K562 (cell line): ENCODE measurements at regions of chr17 and their contacts with region 1.

Region 1: DNA sequence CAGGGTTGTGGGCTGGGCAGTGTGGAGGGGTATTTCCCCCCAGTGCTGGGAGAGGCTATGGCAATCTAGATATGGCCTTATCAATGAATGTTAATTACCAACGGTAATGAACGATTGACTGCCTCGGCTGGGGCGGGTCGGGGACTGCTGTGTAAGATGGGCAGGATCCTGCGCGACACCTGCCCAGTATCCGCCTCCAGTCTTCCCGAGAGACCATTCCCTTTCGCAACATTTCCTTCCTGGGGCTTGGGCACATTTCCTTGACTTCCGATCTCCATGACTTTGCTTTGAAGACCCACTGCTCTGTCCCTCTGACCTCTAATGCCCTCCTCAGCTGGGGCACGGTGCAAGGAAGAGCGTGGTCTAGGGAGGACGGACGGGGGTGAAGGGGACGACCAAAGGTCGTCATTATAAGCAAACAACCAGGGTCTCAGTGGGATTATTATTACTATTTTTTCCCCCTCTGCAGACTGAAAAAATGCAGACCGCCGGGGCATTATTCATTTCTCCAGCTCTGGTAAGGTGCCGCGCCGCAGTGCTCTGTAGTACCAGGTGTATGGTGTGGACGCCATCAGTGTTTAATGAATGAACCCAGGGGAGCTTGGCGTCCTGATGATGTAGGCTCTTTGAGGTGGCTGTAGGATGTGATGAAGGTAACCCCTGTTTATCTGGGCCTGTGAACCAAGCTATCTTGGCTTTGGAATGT is 506 bp downstream of the ATP5MC1 start:
- DNase-seq: no peak
- ATAC-seq: no peak
- H3K4me3 ChIP-seq: peak overlapping the region; percentile 81
- H3K27ac ChIP-seq: peak overlapping the region; percentile 91
- H3K4me1 ChIP-seq: peaks cover 6 to 8% of the 10 kb centered on the region in 2 experiments; a peak in 2 of 5 replicates
- H3K27me3 ChIP-seq: no peaks in the 10 kb centered on the region
- CTCF ChIP-seq: 0 out of 6 replicates have a peak, but pooled peaks of 1 of the 3 experiments have one; percentile 4
- EP300 ChIP-seq: no peak
- POLR2A ChIP-seq: no peak
- RAD21 ChIP-seq: no peak

Region 2: GRCh38 chr17:48690655-48691054 is 202.4 kb before region 1 on chr17:
- CTCF ChIA-PET with region 1: no interaction called
- POLR2A ChIA-PET with region 1: no interaction called
- in situ Hi-C with region 1: no loop called
- intact Hi-C with region 1: no loop called
- DNase-seq: no peak
- ATAC-seq: no peak
- H3K4me3 ChIP-seq: no peak overlapping the region
- H3K27ac ChIP-seq: no peak overlapping the region
- H3K4me1 ChIP-seq: no peaks in the 10 kb centered on the region; a peak in 1 of 5 replicates
- H3K27me3 ChIP-seq: peaks cover 8 to 10% of the 10 kb centered on the region in 2 experiments; a peak in 3 of 5 replicates
- CTCF ChIP-seq: no peak
- EP300 ChIP-seq: no peak
- POLR2A ChIP-seq: no peak
- RAD21 ChIP-seq: no peak

Region 3: GRCh38 chr17:48908047-48908843 is 15.2 kb after region 1 on chr17 and contains the start of gene UBE2Z:
- CTCF ChIA-PET with region 1: interaction called, 3 read pairs
- POLR2A ChIA-PET with region 1: interaction called, 52 read pairs
- in situ Hi-C with region 1: no loop called
- intact Hi-C with region 1: loop called (anchors 1 kb)
- DNase-seq: peak; percentile 95 to 98 (median 96)
- ATAC-seq: peak; percentile 94
- H3K4me3 ChIP-seq: peak within 1 kb of the TSS; percentile 88
- H3K27ac ChIP-seq: peak within 1 kb of the TSS; percentile 91
- H3K4me1 ChIP-seq: peaks cover 8 to 12% of the 10 kb centered on the region in 2 experiments; a peak in 4 of 5 replicates
- H3K27me3 ChIP-seq: no peaks in the 10 kb centered on the region
- CTCF ChIP-seq: peak; percentile 43 to 51 (median 43); a peak in 4 of 6 replicates
- EP300 ChIP-seq: no peak
- POLR2A ChIP-seq: peak; percentile 92
- RAD21 ChIP-seq: no peak
- polyA plus RNA-seq, gene UBE2Z: 11.8 to 15.0 TPM

Region 4: DNA sequence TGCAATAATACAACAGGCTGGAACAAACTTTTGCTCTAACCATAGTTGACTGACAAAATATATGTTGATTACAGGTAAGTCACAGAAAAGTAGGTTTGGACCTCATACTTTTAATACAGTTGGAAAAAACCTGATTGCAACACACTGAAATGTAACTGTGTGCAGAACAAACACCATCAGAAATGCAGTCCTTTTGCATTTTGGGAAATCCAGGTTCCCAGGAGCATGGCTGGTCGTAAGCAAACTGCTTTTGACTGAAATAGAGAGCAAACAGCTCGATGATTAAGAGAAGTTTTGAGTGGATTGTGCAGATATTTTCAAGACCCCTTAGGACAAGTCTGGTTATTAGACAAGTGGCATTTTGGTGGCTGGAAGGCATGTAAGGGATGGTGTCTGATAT is 112.0 kb after region 1 on chr17:
- CTCF ChIA-PET with region 1: no interaction called
- POLR2A ChIA-PET with region 1: interaction called, 10 read pairs
- in situ Hi-C with region 1: no loop called
- intact Hi-C with region 1: no loop called
- DNase-seq: no peak
- ATAC-seq: no peak
- H3K4me3 ChIP-seq: no peak overlapping the region
- H3K27ac ChIP-seq: no peak overlapping the region
- H3K4me1 ChIP-seq: peaks cover 7 to 11% of the 10 kb centered on the region in 2 experiments; a peak in 4 of 5 replicates
- H3K27me3 ChIP-seq: no peaks in the 10 kb centered on the region
- CTCF ChIP-seq: no peak
- EP300 ChIP-seq: no peak
- POLR2A ChIP-seq: no peak
- RAD21 ChIP-seq: no peak

Region 5: GRCh38 chr17:49022391-49022941 is 129.4 kb after region 1 on chr17:
- CTCF ChIA-PET with region 1: no interaction called
- POLR2A ChIA-PET with region 1: no interaction called
- in situ Hi-C with region 1: no loop called
- intact Hi-C with region 1: loop called (anchors 10 kb)
- DNase-seq: peak in 2 of 4 experiments; percentile 48 to 51
- ATAC-seq: no peak; the same call in 2 of the 3 replicates
- H3K4me3 ChIP-seq: no peak overlapping the region
- H3K27ac ChIP-seq: no peak overlapping the region
- H3K4me1 ChIP-seq: peaks cover 7 to 10% of the 10 kb centered on the region in 2 experiments; a peak in 4 of 5 replicates
- H3K27me3 ChIP-seq: no peaks in the 10 kb centered on the region
- CTCF ChIP-seq: no peak
- EP300 ChIP-seq: no peak
- POLR2A ChIP-seq: no peak; the same call in 1 of the 2 replicates
- RAD21 ChIP-seq: no peak

Region 6: DNA sequence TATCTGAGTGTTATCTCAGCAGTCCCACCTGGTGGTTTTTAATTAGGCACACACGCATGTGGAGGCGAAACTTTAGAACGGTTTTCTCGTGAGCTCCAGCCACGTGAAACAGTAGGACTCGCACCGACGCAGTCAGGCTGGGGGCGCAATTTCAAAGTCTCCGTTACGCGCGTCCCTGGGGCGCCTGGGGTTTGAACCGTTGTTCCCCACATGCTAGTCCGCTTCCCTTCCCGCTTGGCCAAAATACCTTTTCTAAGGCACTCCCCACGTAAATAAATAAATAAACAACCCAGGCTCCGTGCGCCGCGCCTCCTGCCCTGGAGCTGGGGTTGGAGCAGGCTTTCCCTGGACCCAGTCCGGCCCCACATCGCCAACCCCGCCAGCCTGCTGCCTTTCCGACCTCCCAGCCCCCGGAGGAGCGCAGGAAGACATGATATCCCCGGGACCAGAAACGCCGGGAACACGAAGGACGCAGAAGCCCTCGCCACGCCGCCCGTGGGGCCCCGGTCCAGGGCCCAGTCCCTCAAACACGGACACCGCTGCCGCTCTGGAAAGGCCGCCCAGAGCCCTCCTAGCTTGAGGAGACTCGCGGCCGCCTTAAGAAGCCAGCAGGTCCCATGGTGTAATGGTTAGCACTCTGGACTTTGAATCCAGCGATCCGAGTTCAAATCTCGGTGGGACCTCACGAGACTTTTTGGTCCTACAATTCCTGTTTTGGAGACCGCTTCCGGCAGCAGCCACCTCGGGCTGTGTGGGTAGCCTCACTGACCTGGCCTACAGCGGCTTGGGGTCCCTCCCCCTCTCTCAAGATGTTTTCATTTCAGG is 299.0 kb after region 1 on chr17:
- CTCF ChIA-PET with region 1: no interaction called
- POLR2A ChIA-PET with region 1: no interaction called
- in situ Hi-C with region 1: no loop called
- intact Hi-C with region 1: loop called (anchors 5 kb)
- DNase-seq: peak; percentile 67 to 93 (median 72)
- ATAC-seq: peak; percentile 79
- H3K4me3 ChIP-seq: peak overlapping the region; percentile 72
- H3K27ac ChIP-seq: peak overlapping the region; percentile 99
- H3K4me1 ChIP-seq: peaks cover 7 to 9% of the 10 kb centered on the region in 2 experiments; a peak in 3 of 5 replicates
- H3K27me3 ChIP-seq: no peaks in the 10 kb centered on the region
- CTCF ChIP-seq: peak; percentile 43 to 59 (median 45)
- EP300 ChIP-seq: peak; percentile 69
- POLR2A ChIP-seq: peak; percentile 84
- RAD21 ChIP-seq: peak in 1 of 2 experiments; percentile 40; a peak in 3 of 4 replicates